ENCODE measurements at regions of chr13 and their contacts with region 1.

Region 1: DNA sequence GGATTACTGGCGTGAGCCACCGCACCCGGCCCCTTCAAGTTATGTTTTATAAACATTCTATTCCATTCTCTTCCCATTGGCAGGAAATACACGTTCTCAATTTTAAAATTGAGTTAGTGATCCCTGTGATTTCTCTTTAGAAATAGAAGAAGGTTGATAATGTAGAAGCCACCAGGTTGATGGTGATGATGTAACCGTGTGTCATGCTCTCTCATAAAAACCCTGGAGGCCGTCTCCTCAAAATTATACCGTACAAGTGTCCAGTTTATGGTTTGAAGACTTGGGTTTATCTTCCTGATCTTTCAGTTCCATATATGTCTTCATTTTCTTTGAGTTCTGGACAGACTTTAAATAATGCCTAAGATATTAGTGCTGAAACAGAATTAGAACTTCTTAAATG is 32.2 kb downstream of the COG3 start:
- DNase-seq: no peak
- ATAC-seq: no peak
- H3K4me3 ChIP-seq: no peak overlapping the region
- H3K27ac ChIP-seq: no peak overlapping the region
- H3K4me1 ChIP-seq: peaks cover 14% of the 10 kb centered on the region
- H3K27me3 ChIP-seq: no peaks in the 10 kb centered on the region
- CTCF ChIP-seq: no peak
- EP300 ChIP-seq: no peak
- POLR2A ChIP-seq: no peak
- RAD21 ChIP-seq: no peak

Region 2: DNA sequence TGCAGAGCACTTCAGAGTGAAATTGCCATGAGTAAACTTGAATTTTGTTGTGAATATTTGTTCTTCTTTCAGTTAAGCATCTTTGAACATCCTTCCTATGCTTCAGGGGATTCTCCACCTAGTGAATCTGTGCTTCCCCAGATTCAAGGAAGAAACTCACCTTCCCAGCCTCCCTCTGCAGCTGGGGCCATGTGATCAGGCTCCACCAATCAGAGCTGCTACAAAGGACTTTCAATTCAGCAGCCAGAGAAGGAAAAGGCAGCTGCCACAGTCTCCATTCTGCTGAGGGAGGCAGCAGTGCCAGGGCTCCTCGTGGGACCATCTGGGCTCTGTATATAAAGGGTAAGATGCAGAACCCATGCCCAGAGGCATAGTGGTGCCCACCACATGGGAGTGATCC is 444.3 kb after region 1 on chr13:
- CTCF ChIA-PET with region 1: no interaction called
- POLR2A ChIA-PET with region 1: no interaction called
- in situ Hi-C with region 1: no loop called
- intact Hi-C with region 1: loop called (anchors 5 kb)
- DNase-seq: no peak
- ATAC-seq: no peak
- H3K4me3 ChIP-seq: no peak overlapping the region
- H3K27ac ChIP-seq: no peak overlapping the region
- H3K4me1 ChIP-seq: peaks cover 7% of the 10 kb centered on the region; the same call in 1 of the 2 replicates
- H3K27me3 ChIP-seq: no peaks in the 10 kb centered on the region
- CTCF ChIP-seq: no peak
- EP300 ChIP-seq: no peak
- POLR2A ChIP-seq: no peak
- RAD21 ChIP-seq: no peak

Measured in HepG2 (cell line).